Activated CD4-positive, alpha-beta memory T cell treated with anti-CD3 and anti-CD28 coated beads, Interleukin-2, amount 10 ng/mL, durations not matched to agents 7 days and 5 days (primary cell): ENCODE measurements at regions of chr17 and their contacts with region 1.

Region 1: GRCh38 chr17:7177196-7177953 is 1.8 kb downstream of the ASGR1 start:
- DNase-seq: peak; percentile 67
- H3K4me3 Mint-ChIP-seq: peak overlapping the region; percentile 25
- H3K27ac Mint-ChIP-seq: no peak overlapping the region
- H3K4me1 Mint-ChIP-seq: peaks cover 12% of the 10 kb centered on the region
- H3K27me3 Mint-ChIP-seq: peaks cover 22% of the 10 kb centered on the region

Region 2: DNA sequence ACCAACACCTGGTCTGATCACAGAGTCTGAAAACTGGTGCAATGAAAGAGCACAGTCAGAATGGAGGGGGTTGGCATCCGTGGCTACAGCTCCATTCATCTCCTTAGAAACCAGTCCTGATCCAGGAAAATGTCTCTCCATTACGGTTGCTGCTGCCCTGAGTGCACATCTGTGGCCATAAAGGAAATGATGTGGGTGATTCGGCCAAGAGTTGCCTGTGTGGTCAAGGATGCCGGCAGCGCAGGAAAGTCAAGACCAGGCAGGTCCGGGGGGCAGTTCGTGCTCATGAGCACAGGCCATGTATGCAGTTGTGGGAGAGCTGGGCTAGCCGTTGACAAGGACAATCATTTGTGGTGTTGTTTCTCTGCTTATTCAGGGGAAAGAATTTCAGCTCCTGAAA is 415.6 kb before region 1 on chr17:
- CTCF ChIA-PET with region 1: no interaction called
- POLR2A ChIA-PET with region 1: no interaction called
- DNase-seq: no peak
- H3K4me3 Mint-ChIP-seq: no peak overlapping the region
- H3K27ac Mint-ChIP-seq: no peak overlapping the region
- H3K4me1 Mint-ChIP-seq: peaks cover 75% of the 10 kb centered on the region
- H3K27me3 Mint-ChIP-seq: no peaks in the 10 kb centered on the region

Region 3: GRCh38 chr17:7056386-7056785 is 121.0 kb before region 1 on chr17:
- CTCF ChIA-PET with region 1: interaction called, 16 read pairs
- POLR2A ChIA-PET with region 1: no interaction called
- DNase-seq: no peak
- H3K4me3 Mint-ChIP-seq: no peak overlapping the region
- H3K27ac Mint-ChIP-seq: no peak overlapping the region
- H3K4me1 Mint-ChIP-seq: peaks cover 5% of the 10 kb centered on the region
- H3K27me3 Mint-ChIP-seq: peaks cover 10% of the 10 kb centered on the region

Region 4: DNA sequence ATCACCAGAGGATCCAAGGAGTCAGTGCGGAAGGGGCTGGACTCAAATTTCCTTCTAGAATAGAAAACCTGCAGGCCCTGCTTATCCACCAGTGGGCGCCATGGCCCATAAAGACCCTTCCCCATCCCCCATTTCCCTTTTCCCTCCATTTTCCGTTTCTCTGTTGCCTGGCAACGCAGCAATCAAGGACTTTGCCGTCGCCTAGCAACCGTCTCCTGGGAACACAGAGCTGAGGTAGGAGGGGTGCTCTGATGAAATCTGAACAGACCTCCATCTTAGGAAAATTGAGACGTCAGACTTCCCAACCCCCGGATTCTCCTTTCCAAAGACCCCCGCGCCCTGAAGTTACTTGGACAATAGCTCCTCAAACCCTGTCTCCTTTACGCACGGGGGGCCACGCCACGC is 36.5 kb after region 1 on chr17:
- CTCF ChIA-PET with region 1: no interaction called
- POLR2A ChIA-PET with region 1: no interaction called
- DNase-seq: no peak
- H3K4me3 Mint-ChIP-seq: peak overlapping the region; percentile 82
- H3K27ac Mint-ChIP-seq: peak overlapping the region; percentile 81
- H3K4me1 Mint-ChIP-seq: peaks cover 42% of the 10 kb centered on the region
- H3K27me3 Mint-ChIP-seq: peaks cover 21% of the 10 kb centered on the region